Mammary epithelial cell (primary cell): ENCODE measurements at regions of chr22 and their contacts with region 1.

Region 1: GRCh38 chr22:27804470-27805297 is 3.1 kb upstream of the MN1 start:
- DNase-seq: peak; percentile 41
- H3K4me3 ChIP-seq: no peak overlapping the region
- H3K27ac ChIP-seq: no peak overlapping the region
- H3K4me1 ChIP-seq: peaks cover 19% of the 10 kb centered on the region
- H3K27me3 ChIP-seq: no peaks in the 10 kb centered on the region
- CTCF ChIP-seq: peak; percentile 52 to 75

Region 2: GRCh38 chr22:26679003-26679629 is 1125.6 kb before region 1 on chr22:
- CTCF ChIA-PET with region 1: no interaction called
- dilution Hi-C with region 1: no loop called
- in situ Hi-C with region 1: no loop called
- intact Hi-C with region 1: loop called (anchors 5 kb)
- DNase-seq: peak; percentile 54
- H3K4me3 ChIP-seq: no peak overlapping the region
- H3K27ac ChIP-seq: no peak overlapping the region
- H3K4me1 ChIP-seq: peaks cover 6% of the 10 kb centered on the region
- H3K27me3 ChIP-seq: no peaks in the 10 kb centered on the region
- CTCF ChIP-seq: peak; percentile 92 to 94

Region 3: DNA sequence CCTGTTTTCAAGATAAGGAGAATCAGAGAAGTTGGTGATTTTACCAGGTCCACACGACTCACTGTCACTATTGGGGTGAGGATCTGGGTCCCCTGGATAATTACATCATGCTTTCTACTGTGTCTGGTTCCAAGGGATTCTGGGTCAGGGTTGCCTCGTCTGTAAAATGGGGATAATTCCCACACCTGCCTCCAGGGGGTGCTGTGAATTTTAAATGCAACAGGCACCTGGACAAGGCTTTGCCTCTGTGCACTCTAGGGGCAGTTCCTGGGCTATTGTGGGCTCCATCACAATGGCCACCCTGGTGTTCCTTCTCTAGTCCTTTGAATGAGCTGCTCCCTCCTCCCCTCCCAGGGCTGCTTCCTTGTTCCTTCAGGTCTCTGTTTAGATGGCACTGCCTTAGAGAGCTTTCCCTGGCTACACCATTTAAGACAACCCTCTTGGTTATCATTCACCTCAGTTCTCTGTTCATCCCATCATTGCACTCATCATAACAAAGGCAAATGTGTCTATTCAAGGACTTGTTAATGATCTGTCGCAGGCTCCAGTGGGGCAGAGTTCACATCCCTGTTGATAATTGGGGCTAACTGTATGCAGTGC is 968.7 kb before region 1 on chr22:
- CTCF ChIA-PET with region 1: no interaction called
- dilution Hi-C with region 1: no loop called
- in situ Hi-C with region 1: no loop called
- intact Hi-C with region 1: loop called (anchors 2 kb)
- DNase-seq: peak; percentile 22
- H3K4me3 ChIP-seq: no peak overlapping the region
- H3K27ac ChIP-seq: no peak overlapping the region
- H3K4me1 ChIP-seq: no peaks in the 10 kb centered on the region
- H3K27me3 ChIP-seq: no peaks in the 10 kb centered on the region
- CTCF ChIP-seq: peak; percentile 73 to 76

Region 4: GRCh38 chr22:27420817-27421361 is 383.8 kb before region 1 on chr22:
- CTCF ChIA-PET with region 1: no interaction called
- dilution Hi-C with region 1: no loop called
- in situ Hi-C with region 1: loop called in 1 of 2 experiments (anchors 10 kb)
- intact Hi-C with region 1: loop called (anchors 5 kb)
- DNase-seq: peak; percentile 82
- H3K4me3 ChIP-seq: no peak overlapping the region
- H3K27ac ChIP-seq: peak overlapping the region; percentile 52
- H3K4me1 ChIP-seq: peaks cover 44% of the 10 kb centered on the region
- H3K27me3 ChIP-seq: no peaks in the 10 kb centered on the region
- CTCF ChIP-seq: no peak

Region 5: DNA sequence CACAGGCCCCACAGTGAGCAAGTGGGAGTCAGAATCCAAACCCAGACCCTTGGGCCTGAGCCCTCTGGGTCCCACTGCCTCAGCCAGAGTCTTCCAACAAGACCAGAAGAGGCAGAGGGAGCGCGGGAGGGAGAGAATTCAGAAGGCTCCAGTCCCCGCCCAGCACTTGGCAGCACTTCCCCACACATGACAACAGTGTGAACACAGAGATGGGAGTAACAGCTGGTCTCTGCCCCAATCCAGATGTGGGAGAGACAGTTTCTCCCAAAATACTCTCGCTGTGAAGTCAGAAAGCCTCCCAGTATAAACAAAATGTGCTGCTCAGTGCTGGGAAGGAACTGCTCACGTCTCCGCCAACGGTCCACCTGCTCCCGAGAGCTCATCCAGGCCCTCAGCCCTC is 223.0 kb before region 1 on chr22:
- CTCF ChIA-PET with region 1: no interaction called
- dilution Hi-C with region 1: no loop called
- in situ Hi-C with region 1: no loop called
- intact Hi-C with region 1: no loop called
- DNase-seq: no peak
- H3K4me3 ChIP-seq: no peak overlapping the region
- H3K27ac ChIP-seq: no peak overlapping the region
- H3K4me1 ChIP-seq: peaks cover 3% of the 10 kb centered on the region
- H3K27me3 ChIP-seq: no peaks in the 10 kb centered on the region
- CTCF ChIP-seq: no peak

Region 6: DNA sequence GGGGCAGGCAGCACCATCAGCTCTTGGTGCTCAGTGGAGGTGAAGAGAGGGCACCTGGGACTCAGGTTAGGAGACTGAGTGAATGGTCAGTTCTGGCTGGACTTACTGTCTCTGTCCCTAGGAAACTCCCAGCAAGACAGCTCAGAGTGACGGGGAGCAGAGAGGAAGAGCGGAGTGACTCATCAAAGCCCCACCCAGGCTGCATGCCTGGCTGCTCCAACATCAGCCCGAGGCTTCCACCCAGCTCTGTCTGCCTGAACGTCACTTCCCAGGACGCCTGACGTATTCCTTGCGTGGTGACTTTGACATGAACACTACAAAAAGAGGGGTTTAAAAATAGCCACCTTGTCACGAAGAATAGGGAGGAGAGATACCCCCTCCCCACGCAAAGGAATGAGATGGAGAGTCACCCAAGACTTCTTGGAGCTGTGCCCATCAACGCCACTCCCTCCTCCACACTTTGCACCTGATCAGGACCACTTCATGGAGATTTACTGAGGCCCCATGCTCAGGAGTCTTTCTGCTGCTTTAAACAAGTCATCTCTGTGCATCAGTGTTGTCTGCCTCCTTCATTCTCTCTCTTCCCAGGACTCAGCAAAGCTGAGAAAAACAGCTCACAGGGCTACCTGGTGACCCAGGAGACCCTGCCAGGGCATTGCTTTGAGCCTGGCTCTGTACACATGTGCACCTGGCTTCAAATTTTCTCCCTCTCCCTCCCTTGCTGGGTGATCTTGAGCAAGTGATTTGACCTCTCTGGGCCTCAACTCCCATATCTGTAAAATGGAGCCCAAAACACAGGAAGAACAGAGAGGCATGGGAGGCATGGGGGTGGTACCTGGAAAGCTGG is 86.3 kb before region 1 on chr22:
- CTCF ChIA-PET with region 1: no interaction called
- dilution Hi-C with region 1: no loop called
- in situ Hi-C with region 1: no loop called
- intact Hi-C with region 1: loop called (anchors 1 kb)
- DNase-seq: peak; percentile 96
- H3K4me3 ChIP-seq: no peak overlapping the region
- H3K27ac ChIP-seq: peak overlapping the region; percentile 84
- H3K4me1 ChIP-seq: peaks cover 36% of the 10 kb centered on the region
- H3K27me3 ChIP-seq: no peaks in the 10 kb centered on the region
- CTCF ChIP-seq: no peak

Region 7: DNA sequence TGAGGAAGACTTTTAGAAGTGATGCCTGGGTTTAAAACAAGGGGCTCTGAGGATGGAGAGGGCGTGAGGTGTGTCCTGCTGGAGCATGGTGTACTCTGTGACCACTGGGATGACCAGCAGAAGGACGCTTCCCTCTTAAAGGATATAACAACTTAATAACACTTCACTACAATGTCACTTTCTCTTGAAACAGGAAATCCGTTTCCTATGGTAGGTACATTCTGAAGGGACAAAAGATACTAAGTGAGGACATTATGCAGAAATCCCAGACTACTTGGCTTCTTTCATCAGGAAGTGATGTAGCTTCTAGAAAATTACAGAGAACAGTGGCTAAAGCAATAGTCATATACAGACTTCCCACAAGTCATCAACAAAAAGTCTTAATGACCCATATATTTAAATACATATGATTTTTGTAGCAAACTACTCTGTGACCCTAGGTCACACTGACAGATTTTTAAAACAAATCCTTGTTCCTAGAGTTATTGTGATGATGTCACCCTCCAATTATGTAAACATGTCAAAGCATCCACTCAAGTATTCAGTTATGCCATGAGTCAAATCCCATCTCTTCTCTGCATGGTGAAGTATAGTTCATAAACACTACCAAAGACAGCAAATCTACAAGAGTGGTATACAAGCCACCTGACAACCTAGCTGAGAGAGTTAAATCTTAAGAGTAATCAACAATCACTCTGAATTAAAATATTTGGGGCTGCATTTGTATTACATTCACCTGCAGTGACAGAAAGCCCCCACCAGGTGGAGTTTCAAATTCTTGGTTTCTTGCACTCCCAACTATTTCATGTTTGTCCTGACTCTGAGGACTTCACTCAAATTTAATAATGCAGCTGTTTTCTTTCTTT is 81.5 kb after region 1 on chr22:
- CTCF ChIA-PET with region 1: no interaction called
- dilution Hi-C with region 1: no loop called
- in situ Hi-C with region 1: no loop called
- intact Hi-C with region 1: no loop called
- DNase-seq: peak; percentile 52
- H3K4me3 ChIP-seq: no peak overlapping the region
- H3K27ac ChIP-seq: no peak overlapping the region
- H3K4me1 ChIP-seq: peaks cover 26% of the 10 kb centered on the region
- H3K27me3 ChIP-seq: no peaks in the 10 kb centered on the region
- CTCF ChIP-seq: peak; percentile 75 to 79

Region 8: GRCh38 chr22:28094771-28095170 is 290.1 kb after region 1 on chr22:
- CTCF ChIA-PET with region 1: no interaction called
- dilution Hi-C with region 1: no loop called
- in situ Hi-C with region 1: no loop called
- intact Hi-C with region 1: no loop called
- DNase-seq: no peak
- H3K4me3 ChIP-seq: no peak overlapping the region
- H3K27ac ChIP-seq: no peak overlapping the region
- H3K4me1 ChIP-seq: no peaks in the 10 kb centered on the region
- H3K27me3 ChIP-seq: no peaks in the 10 kb centered on the region
- CTCF ChIP-seq: no peak